Kidney (tissue), 22 donors: ENCODE measurements at regions of chr9 and their contacts with region 1.

Region 1: GRCh38 chr9:130682490-130683121 is 11.0 kb upstream of the EXOSC2 start:
- DNase-seq: peak; percentile 78 to 89 (median 85)
- H3K4me3 ChIP-seq: peak overlapping the region in 1 of 3 donors; percentile 29
- H3K27ac ChIP-seq: no peak overlapping the region
- H3K4me1 ChIP-seq: peaks cover 0 to 10% (median 5%) of the 10 kb centered on the region in 3 donors
- H3K27me3 ChIP-seq: peaks cover 4% of the 10 kb centered on the region
- CTCF ChIP-seq: peak; percentile 81

Region 2: DNA sequence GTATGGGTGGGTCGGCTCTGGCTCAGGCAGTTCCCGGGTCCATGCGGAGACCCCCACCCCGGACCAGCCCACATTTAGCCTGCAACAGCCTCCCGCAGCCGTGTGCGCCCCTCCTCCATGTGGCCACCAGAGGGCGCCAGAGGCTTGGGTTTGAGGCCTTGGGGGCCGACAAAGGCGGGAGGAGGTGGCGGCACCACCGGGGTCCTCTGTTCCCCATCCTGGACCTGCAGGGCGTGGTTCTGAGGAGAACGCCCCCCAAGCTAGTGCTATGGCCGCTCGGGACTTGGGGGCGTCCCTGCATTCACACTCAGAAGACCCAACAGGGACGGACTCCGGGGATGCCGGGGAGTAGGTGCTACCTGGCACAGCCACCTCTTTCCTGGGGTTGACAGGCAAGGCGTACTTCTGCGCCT is 221.4 kb before region 1 on chr9:
- intact Hi-C with region 1: loop called (anchors 5 kb)
- DNase-seq: peak in 4 of 5 donors; percentile 62 to 83 (median 78)
- H3K4me3 ChIP-seq: no peak overlapping the region
- H3K27ac ChIP-seq: no peak overlapping the region
- H3K4me1 ChIP-seq: peaks cover 0 to 4% (median 0%) of the 10 kb centered on the region in 3 donors
- H3K27me3 ChIP-seq: no peaks in the 10 kb centered on the region
- CTCF ChIP-seq: peak; percentile 83